CD8-positive, alpha-beta T cell (primary cell): ENCODE measurements at regions of chr14 and their contacts with region 1.

Region 1: DNA sequence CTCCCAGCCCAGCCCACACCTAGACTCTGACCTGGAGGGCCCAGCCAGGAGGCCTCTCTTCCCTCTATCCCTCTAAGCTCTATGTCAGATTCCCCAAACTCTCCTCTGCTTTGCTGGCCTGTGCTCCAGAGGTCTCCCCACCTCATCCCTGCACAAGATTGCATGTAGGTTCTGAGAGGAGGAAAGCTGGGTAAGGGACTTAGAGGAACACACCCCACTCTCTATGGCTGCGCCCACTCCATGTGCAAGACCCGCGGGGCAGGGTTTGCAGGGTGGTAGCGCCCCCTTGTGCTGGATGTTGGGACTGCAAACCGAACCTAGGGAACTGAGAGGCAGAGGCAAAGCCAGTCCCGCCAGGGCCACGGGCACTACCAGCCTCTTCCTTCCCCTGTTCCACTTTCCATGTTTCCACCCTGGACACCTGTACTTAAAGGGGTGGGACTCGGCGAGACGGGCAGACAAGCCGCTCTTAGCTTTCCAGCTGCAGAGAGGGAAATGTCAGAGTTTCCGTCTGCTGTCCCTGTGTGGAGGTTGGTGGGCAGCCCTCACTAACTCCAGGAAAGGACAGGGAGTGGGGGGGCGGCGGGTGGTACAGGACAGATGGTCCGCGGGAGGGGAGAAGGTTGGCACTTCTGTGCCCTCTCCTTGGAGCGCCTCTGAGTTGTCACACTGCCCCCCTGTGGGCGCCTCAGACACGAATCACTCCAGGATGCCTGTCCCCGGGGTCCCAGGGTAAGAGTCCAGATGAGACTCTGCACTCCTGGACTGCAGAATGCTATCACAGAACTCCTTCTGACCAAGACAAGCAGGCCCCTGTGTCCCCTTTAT is 16.8 kb downstream of the MMP14 start:
- DNase-seq: peak; percentile 83 to 96 (median 88)
- ATAC-seq: peak; percentile 96
- H3K4me3 ChIP-seq: peak overlapping the region; percentile 58 to 96
- H3K4me3 Mint-ChIP-seq: peak overlapping the region; percentile 83
- H3K27ac ChIP-seq: no peak overlapping the region
- H3K27ac Mint-ChIP-seq: peak overlapping the region; percentile 41
- H3K4me1 ChIP-seq: peaks cover 10% of the 10 kb centered on the region
- H3K4me1 Mint-ChIP-seq: peaks cover 9% of the 10 kb centered on the region
- H3K27me3 ChIP-seq: peaks cover 0 to 8% of the 10 kb centered on the region in 2 experiments
- H3K27me3 Mint-ChIP-seq: peaks cover 15% of the 10 kb centered on the region
- CTCF ChIP-seq: peak; percentile 86

Region 2: DNA sequence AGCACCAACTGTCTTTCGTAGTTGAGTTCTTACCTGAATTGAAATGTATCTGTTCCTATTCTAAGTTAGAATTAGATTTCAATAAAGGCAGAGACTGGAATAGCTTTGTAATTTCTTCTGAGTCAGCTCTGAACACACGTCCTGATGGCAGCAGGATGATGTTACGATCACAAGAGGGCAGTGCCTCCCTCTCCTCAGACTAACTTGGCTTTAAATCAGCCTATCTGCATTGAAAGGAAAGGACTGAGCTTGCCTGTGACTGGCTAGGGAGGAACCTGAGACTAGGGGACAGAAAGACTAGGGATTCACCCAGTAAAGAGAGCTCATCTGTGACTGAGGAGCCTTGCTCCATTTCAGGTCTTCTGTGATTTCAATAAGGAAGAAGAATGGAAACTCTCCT is 855.9 kb before region 1 on chr14:
- CTCF ChIA-PET with region 1: interaction called, 3 read pairs
- POLR2A ChIA-PET with region 1: no interaction called
- intact Hi-C with region 1: loop called in 1 of 2 experiments (anchors 10 kb)
- DNase-seq: peak in 5 of 9 experiments; percentile 24 to 77 (median 52)
- ATAC-seq: peak; percentile 91
- H3K4me3 ChIP-seq: peak overlapping the region; percentile 46 to 48
- H3K4me3 Mint-ChIP-seq: peak overlapping the region; percentile 86
- H3K27ac ChIP-seq: peak overlapping the region; percentile 24 to 36
- H3K27ac Mint-ChIP-seq: peak overlapping the region; percentile 95
- H3K4me1 ChIP-seq: peaks cover 7% of the 10 kb centered on the region
- H3K4me1 Mint-ChIP-seq: peaks cover 24% of the 10 kb centered on the region
- H3K27me3 ChIP-seq: no peaks in the 10 kb centered on the region
- H3K27me3 Mint-ChIP-seq: no peaks in the 10 kb centered on the region
- CTCF ChIP-seq: peak; percentile 27

Region 3: GRCh38 chr14:22748631-22749068 is 104.5 kb before region 1 on chr14:
- CTCF ChIA-PET with region 1: interaction called, 10 read pairs
- POLR2A ChIA-PET with region 1: no interaction called
- intact Hi-C with region 1: no loop called
- DNase-seq: peak in 1 of 9 experiments; percentile 15
- ATAC-seq: no peak
- H3K4me3 ChIP-seq: no peak overlapping the region
- H3K4me3 Mint-ChIP-seq: no peak overlapping the region
- H3K27ac ChIP-seq: no peak overlapping the region
- H3K27ac Mint-ChIP-seq: no peak overlapping the region
- H3K4me1 ChIP-seq: no peaks in the 10 kb centered on the region
- H3K4me1 Mint-ChIP-seq: peaks cover 10% of the 10 kb centered on the region
- H3K27me3 ChIP-seq: peaks cover 0 to 2% of the 10 kb centered on the region in 2 experiments
- H3K27me3 Mint-ChIP-seq: peaks cover 38% of the 10 kb centered on the region
- CTCF ChIP-seq: no peak

Region 4: DNA sequence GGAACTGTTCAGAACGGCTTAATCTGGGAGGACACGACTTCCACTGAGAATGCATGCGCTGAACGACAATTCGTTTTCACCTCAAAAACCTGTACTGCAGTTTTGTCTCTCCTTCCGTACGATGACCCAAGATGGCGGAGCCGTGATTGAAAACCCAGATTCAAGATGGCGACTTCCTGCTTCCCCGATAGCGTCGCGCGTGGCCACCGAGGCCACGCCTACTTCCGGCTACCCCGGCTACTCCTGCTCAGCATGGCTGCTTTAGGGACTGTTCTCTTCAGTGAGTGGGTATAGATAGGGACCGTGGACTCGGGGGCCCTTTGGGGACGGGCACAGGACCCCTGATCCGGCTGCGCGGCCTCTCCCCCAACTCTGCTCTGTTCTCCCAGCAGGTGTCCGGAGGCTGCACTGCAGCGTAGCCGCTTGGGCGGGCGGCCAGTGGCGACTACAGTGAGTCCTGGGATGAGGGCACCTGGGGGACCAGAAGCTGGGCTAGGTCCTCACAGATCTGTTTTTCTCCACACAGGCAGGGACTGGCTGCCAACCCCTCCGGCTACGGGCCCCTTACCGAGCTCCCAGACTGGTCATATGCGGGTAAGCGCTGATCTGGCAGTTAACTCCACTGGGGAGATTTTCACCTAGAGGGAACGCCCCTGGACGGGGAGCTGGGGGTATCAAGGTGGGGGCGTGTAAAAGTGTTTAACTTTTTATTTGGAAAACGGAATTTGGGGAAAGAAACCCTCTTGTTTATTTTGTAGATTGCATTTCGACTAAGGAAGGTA is 23.3 kb before region 1 on chr14 and contains the start of gene MRPL52:
- CTCF ChIA-PET with region 1: interaction called, 432 read pairs
- POLR2A ChIA-PET with region 1: interaction called, 3 read pairs
- intact Hi-C with region 1: no loop called
- DNase-seq: peak; percentile 81 to 97 (median 90)
- ATAC-seq: peak; percentile 95
- H3K4me3 ChIP-seq: peak within 1 kb of the TSS; percentile 89 to 91
- H3K4me3 Mint-ChIP-seq: peak within 1 kb of the TSS; percentile 92
- H3K27ac ChIP-seq: peak within 1 kb of the TSS; percentile 69 to 90
- H3K27ac Mint-ChIP-seq: peak within 1 kb of the TSS; percentile 96
- H3K4me1 ChIP-seq: peaks cover 13% of the 10 kb centered on the region
- H3K4me1 Mint-ChIP-seq: peaks cover 31% of the 10 kb centered on the region
- H3K27me3 ChIP-seq: peaks cover 0 to 5% of the 10 kb centered on the region in 2 experiments
- H3K27me3 Mint-ChIP-seq: peaks cover 7% of the 10 kb centered on the region
- CTCF ChIP-seq: no peak
- total RNA-seq, gene MRPL52: 22.3 to 25.7 TPM

Region 5: GRCh38 chr14:22865424-22866405 is 12.6 kb after region 1 on chr14:
- CTCF ChIA-PET with region 1: interaction called, 24 read pairs
- POLR2A ChIA-PET with region 1: no interaction called
- intact Hi-C with region 1: no loop called
- DNase-seq: peak in 2 of 9 experiments; percentile 29 to 35
- ATAC-seq: no peak
- H3K4me3 ChIP-seq: no peak overlapping the region
- H3K4me3 Mint-ChIP-seq: no peak overlapping the region
- H3K27ac ChIP-seq: no peak overlapping the region
- H3K27ac Mint-ChIP-seq: no peak overlapping the region
- H3K4me1 ChIP-seq: peaks cover 7% of the 10 kb centered on the region
- H3K4me1 Mint-ChIP-seq: peaks cover 11% of the 10 kb centered on the region
- H3K27me3 ChIP-seq: no peaks in the 10 kb centered on the region
- H3K27me3 Mint-ChIP-seq: peaks cover 8% of the 10 kb centered on the region
- CTCF ChIP-seq: no peak

Region 6: GRCh38 chr14:22886500-22887259 is 33.5 kb after region 1 on chr14:
- CTCF ChIA-PET with region 1: interaction called, 36 read pairs
- POLR2A ChIA-PET with region 1: no interaction called
- intact Hi-C with region 1: no loop called
- DNase-seq: peak; percentile 34 to 85 (median 71)
- ATAC-seq: peak; percentile 67
- H3K4me3 ChIP-seq: peak overlapping the region; percentile 40 to 44
- H3K4me3 Mint-ChIP-seq: peak overlapping the region; percentile 81
- H3K27ac ChIP-seq: peak overlapping the region; percentile 29 to 39
- H3K27ac Mint-ChIP-seq: peak overlapping the region; percentile 74
- H3K4me1 ChIP-seq: peaks cover 45% of the 10 kb centered on the region
- H3K4me1 Mint-ChIP-seq: peaks cover 56% of the 10 kb centered on the region
- H3K27me3 ChIP-seq: peaks cover 0 to 2% of the 10 kb centered on the region in 2 experiments
- H3K27me3 Mint-ChIP-seq: no peaks in the 10 kb centered on the region
- CTCF ChIP-seq: no peak